CD8-positive, alpha-beta memory T cell (primary cell): ENCODE measurements at regions of chr19 and their contacts with region 1.

Region 1: DNA sequence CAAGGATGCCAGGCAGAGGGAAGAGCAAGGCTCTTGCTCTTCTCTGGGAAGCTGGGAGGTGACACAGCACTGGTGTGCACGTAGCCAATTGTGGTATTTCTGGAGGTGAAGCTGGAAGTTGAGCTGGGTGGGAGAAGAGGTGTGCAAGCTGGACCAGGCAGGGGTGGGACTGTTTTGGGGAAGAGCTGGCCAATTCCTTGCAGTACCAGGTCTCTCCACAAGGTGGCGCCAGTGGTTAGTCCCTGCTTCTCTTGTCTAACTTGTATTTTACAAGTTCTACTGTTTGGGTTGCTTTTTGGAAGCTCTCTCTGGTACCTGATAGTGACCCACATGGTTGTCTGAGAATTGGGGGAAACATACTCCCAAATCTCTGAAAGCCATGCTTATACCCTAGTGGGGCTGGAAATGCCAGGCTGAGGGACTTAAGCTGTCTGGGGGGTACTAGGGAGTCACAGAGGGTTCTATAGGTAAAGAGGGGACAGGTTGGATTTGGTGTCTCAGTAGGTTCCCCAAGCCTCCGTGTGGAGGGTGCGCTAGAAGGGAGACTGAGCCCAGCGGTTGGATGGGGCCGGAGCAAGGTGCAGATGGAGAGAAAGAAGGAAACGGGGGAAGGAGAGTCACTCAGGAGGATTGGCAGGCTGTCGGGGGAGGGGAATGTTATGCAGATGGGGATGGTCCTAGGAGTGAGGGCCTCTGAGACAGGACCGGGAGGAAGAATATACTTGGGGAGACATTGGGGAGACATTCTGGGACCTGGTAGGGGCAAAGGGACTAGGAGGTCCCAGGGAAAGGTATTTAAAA is 3.0 kb downstream of the HPN start:
- DNase-seq: peak; percentile 33 to 70 (median 53)
- H3K4me3 ChIP-seq: no peak overlapping the region
- H3K4me3 Mint-ChIP-seq: no peak overlapping the region
- H3K27ac ChIP-seq: no peak overlapping the region
- H3K27ac Mint-ChIP-seq: peak overlapping the region in 4 of 8 donors; percentile 45 to 91 (median 47)
- H3K4me1 ChIP-seq: peaks cover 31% of the 10 kb centered on the region
- H3K4me1 Mint-ChIP-seq: peaks cover 21 to 37% (median 31%) of the 10 kb centered on the region in 3 donors
- H3K27me3 ChIP-seq: no peaks in the 10 kb centered on the region
- H3K27me3 Mint-ChIP-seq: peaks cover 2 to 5% of the 10 kb centered on the region in 2 donors

Region 2: DNA sequence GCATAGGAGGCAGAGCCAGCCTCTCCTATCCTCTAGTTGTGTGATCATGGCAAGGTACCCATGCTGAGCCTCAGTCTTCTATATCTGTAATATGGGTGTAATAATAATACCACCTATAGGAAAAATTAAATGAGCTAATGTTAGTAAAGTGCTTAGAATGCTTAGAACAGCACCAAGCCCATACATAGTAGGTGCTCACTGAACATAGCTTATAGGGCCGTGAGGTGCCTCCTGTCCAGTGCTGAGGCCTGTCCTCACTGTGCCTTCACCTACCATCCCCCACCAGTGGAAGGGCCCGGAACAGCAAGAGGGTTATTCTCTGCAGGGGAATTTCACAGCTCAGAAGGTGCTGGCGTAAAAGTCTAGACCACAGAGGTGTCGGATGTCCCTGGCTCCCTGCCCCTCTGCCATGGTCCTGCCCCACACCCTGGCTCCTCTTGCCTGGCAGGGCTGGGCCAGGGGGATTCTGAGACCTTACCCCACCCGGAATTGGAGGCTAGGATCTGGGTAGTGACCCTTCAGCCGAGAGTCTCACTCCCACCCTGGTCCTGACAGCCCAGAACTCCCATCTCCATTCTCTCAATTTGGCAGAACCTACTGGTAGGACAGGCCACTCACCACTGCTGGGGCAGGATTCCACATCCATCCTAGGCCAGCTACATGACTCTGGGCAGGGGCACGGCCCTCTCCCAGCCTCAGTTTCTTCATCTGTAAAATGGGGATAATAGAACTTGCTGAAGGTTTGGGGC is 16.5 kb before region 1 on chr19:
- CTCF ChIA-PET with region 1: interaction called, 15 read pairs
- POLR2A ChIA-PET with region 1: no interaction called
- DNase-seq: no peak
- H3K4me3 ChIP-seq: no peak overlapping the region
- H3K4me3 Mint-ChIP-seq: peak overlapping the region in 4 of 7 donors; percentile 1 to 66 (median 31)
- H3K27ac ChIP-seq: no peak overlapping the region
- H3K27ac Mint-ChIP-seq: peak overlapping the region in 5 of 8 donors; percentile 27 to 81 (median 61)
- H3K4me1 ChIP-seq: peaks cover 6% of the 10 kb centered on the region
- H3K4me1 Mint-ChIP-seq: peaks cover 9 to 19% (median 12%) of the 10 kb centered on the region in 3 donors
- H3K27me3 ChIP-seq: peaks cover 3% of the 10 kb centered on the region
- H3K27me3 Mint-ChIP-seq: peaks cover 8 to 9% of the 10 kb centered on the region in 2 donors

Region 3: DNA sequence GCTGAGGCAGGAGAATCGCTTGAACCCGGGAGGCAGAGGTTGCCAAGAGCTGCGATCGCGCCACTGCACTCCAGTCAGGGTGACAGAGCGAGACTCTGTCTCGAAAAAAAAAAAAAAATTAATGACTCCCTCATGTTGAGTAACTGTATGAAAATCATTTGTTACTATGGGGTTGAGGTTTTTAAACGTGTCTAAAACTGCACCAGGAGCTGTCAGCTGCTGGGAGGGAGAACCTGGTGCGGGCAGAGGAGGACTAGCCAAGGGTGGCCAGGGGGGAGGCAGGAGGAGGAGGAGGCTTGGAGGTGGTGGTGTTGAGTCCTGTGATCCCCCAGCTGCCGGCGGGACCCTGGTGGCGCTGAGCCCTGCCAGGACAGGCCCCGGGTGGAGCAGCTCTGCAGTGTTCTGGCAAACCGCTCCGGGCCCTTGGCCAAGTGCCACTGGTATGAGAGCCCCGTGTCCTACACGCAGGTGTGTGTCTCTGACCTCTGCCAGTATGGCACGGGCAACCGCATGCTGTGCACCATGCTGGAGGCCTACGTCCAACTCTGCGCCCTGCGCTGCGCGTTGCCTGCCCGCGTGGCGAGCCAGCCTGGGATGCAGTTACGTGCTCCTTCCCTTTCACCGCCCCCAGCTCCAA is 54.0 kb after region 1 on chr19:
- CTCF ChIA-PET with region 1: no interaction called
- POLR2A ChIA-PET with region 1: no interaction called
- DNase-seq: no peak
- H3K4me3 ChIP-seq: no peak overlapping the region
- H3K4me3 Mint-ChIP-seq: no peak overlapping the region
- H3K27ac ChIP-seq: no peak overlapping the region
- H3K27ac Mint-ChIP-seq: no peak overlapping the region
- H3K4me1 ChIP-seq: no peaks in the 10 kb centered on the region
- H3K4me1 Mint-ChIP-seq: no peaks in the 10 kb centered on the region
- H3K27me3 ChIP-seq: no peaks in the 10 kb centered on the region
- H3K27me3 Mint-ChIP-seq: no peaks in the 10 kb centered on the region